ENCODE measurements at regions of chr17 and their contacts with region 1.

Region 1: DNA sequence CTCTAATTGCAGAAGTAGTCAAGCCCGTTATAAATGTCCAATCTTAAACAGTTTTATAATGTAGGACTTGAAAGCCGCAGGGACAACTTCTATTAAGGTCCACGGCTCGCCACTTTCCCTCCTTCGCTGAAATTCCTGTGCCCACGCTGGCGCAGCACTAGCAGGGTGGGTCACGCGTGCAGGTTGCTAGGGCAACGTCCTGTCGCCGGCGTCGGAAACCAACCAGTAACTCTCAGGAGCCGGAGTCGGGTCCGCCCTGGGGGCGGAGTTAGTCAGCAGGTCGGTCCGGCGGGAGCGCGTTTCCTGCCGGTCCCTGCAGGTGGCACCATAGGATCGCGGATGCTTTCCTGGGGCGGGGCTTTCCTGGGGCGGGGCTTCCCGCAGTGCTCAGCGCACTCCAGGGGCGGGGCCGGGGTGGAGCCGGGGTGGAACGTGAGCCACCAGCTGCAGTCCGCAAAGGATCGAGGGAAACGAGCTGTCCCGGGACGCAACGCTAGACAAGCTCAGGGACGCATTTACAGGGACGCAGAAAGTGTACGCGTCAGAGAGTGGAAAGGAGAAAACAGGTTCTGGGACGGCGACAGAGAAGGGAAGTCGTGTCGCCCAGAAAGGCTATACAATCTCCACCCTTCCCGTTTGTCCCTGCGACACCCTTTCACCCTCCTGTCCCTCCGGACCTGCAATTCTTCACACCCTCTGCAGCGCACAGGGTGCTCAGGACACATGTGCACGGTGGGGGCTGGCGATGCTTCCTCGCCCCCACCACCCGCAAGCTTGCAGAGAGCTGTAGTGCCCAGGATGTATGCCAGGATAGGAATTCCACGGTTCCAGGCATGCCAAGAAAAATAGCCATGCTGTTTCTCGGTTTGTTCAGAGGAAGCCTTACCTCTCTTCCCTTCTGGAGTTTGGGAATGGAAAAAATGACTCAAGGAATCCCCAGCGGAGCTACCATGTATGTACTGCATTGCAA is 12.4 kb downstream of the COPZ2 start:
- DNase-seq: peak; percentile 95 to 98
- ATAC-seq: peak; percentile 71 to 82
- H3K4me3 ChIP-seq: peak overlapping the region; percentile 43
- H3K27ac ChIP-seq: peak overlapping the region; percentile 71 to 88
- H3K4me1 ChIP-seq: peaks cover 27% of the 10 kb centered on the region
- CTCF ChIP-seq: peak; percentile 96
- EP300 ChIP-seq: no peak
- POLR2A ChIP-seq: peak; percentile 87
- RAD21 ChIP-seq: peak; percentile 96 to 100

Region 2: DNA sequence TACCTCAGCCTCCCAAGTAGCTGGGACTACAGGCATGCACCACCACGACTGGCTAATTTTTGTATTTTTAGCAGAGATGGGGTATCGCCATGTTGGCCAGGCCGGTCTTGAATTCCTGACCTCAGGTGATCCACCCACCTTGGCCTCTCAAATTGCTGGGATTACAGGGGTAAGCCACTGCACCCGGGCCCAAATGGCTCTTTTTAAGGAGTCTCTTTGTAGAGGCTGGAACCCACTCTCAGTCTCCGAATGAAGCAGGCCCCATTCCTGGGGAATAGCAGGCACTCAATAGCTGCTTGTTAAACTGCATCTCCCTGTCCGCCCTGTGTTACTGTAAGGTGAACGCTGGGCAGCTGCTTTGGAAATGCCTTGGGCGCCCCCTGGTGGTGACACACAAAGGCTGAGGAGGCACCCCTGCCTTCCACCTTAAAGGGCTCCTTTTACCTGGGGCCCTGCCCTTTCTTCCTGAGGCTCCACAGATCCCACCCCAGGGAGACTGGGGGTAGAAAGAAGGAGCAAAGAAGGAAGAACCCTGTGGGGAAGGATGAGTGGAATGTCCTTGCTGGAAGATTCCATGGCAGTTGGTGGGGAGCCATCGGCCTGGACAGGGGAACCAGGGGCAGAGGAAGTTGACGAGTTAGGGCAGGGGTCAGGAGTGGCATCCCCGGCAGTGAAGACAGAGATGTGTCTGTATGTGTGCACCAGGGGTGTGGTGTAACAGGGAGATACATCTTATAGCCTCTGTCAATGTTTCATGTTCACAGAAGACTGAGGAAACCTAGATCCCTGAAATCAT is 135.3 kb before region 1 on chr17:
- CTCF ChIA-PET with region 1: interaction called, 17 read pairs
- POLR2A ChIA-PET with region 1: no interaction called
- DNase-seq: peak; percentile 85 to 90
- ATAC-seq: peak; percentile 95 to 98
- H3K4me3 ChIP-seq: no peak overlapping the region
- H3K27ac ChIP-seq: no peak overlapping the region
- H3K4me1 ChIP-seq: peaks cover 23% of the 10 kb centered on the region; the same call in 2 of the 3 replicates
- CTCF ChIP-seq: peak; percentile 99
- EP300 ChIP-seq: no peak
- POLR2A ChIP-seq: no peak
- RAD21 ChIP-seq: peak; percentile 100

Region 3: GRCh38 chr17:48037036-48037837 is 12.0 kb after region 1 on chr17 and contains the start of gene COPZ2:
- CTCF ChIA-PET with region 1: interaction called, 114 read pairs
- POLR2A ChIA-PET with region 1: no interaction called
- DNase-seq: peak; percentile 71 to 85
- ATAC-seq: peak; percentile 94 to 95
- H3K4me3 ChIP-seq: peak within 1 kb of the TSS; percentile 63
- H3K27ac ChIP-seq: peak within 1 kb of the TSS; percentile 74 to 91
- H3K4me1 ChIP-seq: 0 out of 3 replicates have a peak, but pooled peaks cover 3% of the 10 kb centered on the region
- CTCF ChIP-seq: peak; percentile 70
- EP300 ChIP-seq: no peak
- POLR2A ChIP-seq: peak; percentile 28
- RAD21 ChIP-seq: 0 out of 5 replicates have a peak, but pooled peaks have one; percentile 17 to 36
- polyA plus RNA-seq, gene COPZ2: 19.1 and 19.3 TPM in 2 replicates

Region 4: DNA sequence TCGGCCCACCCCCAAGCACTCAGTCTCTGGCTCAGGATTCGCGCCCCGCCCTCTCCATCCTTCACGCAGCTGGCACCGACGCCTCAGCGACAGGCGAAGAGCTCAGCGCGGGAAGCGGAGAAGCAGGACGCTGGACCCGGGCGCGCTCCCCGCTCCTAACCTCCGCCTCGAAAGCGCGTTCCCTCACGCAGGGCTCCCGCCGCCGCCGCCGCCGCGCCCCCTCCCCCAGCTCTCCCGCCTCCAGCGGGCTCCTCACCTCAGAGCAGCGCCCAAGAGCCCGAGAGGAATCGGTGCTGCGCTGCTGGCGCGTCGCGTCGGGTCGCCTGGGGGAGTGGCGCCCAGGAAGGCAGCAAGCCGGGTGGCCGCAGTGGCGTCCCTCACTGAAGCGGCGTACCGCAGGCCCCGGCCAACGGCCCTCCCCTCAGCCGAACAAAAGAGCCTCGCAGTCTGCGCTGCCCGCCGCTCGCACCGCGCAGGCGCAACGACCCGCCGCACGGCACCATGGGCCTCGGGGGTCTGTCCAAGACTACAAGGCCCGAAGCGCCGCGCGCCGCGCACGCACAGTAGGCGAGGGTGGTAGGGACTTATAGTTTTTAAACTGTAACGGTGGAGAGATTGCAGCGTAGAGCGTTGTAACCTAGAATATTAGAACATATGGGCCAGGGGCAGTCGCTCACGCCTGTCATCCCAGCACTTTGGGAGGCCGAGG is 75.9 kb after region 1 on chr17 and contains the start of gene CBX1:
- CTCF ChIA-PET with region 1: interaction called, 79 read pairs
- POLR2A ChIA-PET with region 1: interaction called, 6 read pairs
- DNase-seq: peak; percentile 92 to 99
- ATAC-seq: peak; percentile 93 to 97
- H3K4me3 ChIP-seq: peak within 1 kb of the TSS; percentile 76
- H3K27ac ChIP-seq: peak within 1 kb of the TSS; percentile 89 to 90
- H3K4me1 ChIP-seq: peaks cover 20% of the 10 kb centered on the region
- CTCF ChIP-seq: no peak
- EP300 ChIP-seq: no peak
- POLR2A ChIP-seq: peak; percentile 68
- RAD21 ChIP-seq: no peak
- polyA plus RNA-seq, gene CBX1: 69.6 and 84.4 TPM in 2 replicates

Region 5: GRCh38 chr17:48131216-48131824 is 106.1 kb after region 1 on chr17:
- CTCF ChIA-PET with region 1: interaction called, 196 read pairs
- POLR2A ChIA-PET with region 1: no interaction called
- DNase-seq: peak; percentile 79 to 87
- ATAC-seq: peak; percentile 88 to 93
- H3K4me3 ChIP-seq: no peak overlapping the region
- H3K27ac ChIP-seq: no peak overlapping the region
- H3K4me1 ChIP-seq: peaks cover 12% of the 10 kb centered on the region
- CTCF ChIP-seq: peak; percentile 98
- EP300 ChIP-seq: no peak
- POLR2A ChIP-seq: no peak
- RAD21 ChIP-seq: peak; percentile 91 to 97

Region 6: DNA sequence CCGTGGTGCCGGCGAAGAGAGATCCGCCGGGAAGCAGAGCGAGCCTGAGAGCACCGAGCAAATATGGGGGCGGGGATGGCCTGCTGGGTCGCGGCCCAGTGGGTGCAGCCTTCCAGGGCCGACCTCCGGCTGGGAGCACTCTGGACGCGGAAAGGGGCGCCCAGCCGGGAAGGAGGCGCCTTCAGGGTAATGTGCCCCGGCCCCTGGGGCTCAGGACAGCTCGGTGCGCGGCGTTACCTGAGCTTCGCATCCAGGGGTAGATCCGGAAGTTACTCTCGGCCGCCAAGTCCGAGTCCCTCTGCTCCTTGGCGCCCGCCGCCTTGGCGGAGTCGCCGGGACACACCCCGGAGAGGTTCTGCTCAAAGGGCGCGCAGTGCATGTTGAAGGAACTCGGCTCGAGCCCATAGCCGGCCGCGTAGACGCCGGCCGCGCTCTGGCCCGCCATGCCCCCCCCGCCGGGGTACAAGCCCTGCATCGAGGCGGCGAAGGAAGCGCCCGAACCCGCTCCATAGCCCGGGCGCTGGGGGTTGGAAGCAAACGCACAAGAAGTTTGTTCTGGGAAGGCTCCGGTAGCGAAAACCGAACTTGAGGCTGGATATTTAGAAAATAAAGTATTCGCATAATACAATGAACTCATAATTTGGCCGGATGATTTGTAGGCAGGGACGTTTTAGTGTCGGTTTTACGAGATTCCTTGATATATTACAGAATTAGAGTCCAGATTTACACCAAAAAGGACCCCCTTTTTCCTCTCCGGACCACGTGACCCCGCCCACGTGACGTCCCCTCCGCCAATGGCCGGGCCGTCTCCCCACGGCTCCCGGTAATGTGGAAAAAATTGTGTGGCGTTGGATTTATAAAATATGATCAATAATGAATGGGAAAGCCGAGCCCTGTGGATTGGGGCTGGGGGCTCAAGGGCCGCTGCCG is 585.3 kb after region 1 on chr17 and contains the start of gene HOXB7:
- CTCF ChIA-PET with region 1: interaction called, 17 read pairs
- POLR2A ChIA-PET with region 1: interaction called, 7 read pairs
- DNase-seq: peak; percentile 75 to 91
- ATAC-seq: peak; percentile 11 to 59; a peak in 3 of 6 replicates
- H3K4me3 ChIP-seq: peak within 1 kb of the TSS; percentile 74
- H3K27ac ChIP-seq: peak within 1 kb of the TSS; percentile 93 to 99
- H3K4me1 ChIP-seq: peaks cover 16% of the 10 kb centered on the region
- CTCF ChIP-seq: no peak
- EP300 ChIP-seq: no peak
- POLR2A ChIP-seq: peak; percentile 66
- RAD21 ChIP-seq: no peak
- polyA plus RNA-seq, gene HOXB7: 15.4 and 22.3 TPM in 2 replicates